ENCODE measurements at regions of chr1 and their contacts with region 1.

Region 1: GRCh38 chr1:244047621-244048471 is 3.2 kb upstream of the ZBTB18 start:
- DNase-seq: peak; percentile 97
- H3K4me3 ChIP-seq: peak overlapping the region; percentile 69
- H3K27ac ChIP-seq: peak overlapping the region; percentile 82
- H3K4me1 ChIP-seq: peaks cover 42% of the 10 kb centered on the region
- H3K27me3 ChIP-seq: no peaks in the 10 kb centered on the region
- CTCF ChIP-seq: 0 out of 2 replicates have a peak, but pooled peaks have one; percentile 14

Region 2: DNA sequence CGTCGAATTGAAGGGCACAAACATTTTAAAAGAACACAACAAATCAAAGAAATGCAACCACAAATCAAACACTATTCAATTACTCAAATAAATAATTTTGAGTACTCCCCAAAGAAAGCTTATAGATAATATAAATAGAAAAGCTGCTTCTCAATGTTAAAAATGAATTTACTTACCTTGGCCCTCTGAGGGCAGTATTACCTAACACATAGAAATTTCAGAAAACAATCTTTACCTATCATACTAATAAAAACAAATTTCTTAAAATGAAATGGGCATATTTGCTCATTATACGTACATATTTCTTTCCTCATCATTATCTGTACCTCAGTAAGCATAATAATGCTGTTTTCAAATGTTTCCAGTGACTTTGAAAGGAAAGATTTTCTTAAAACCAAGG is 339.6 kb before region 1 on chr1:
- CTCF ChIA-PET with region 1: no interaction called
- POLR2A ChIA-PET with region 1: no interaction called
- intact Hi-C with region 1: loop called (anchors 5 kb)
- DNase-seq: no peak
- H3K4me3 ChIP-seq: no peak overlapping the region
- H3K27ac ChIP-seq: no peak overlapping the region
- H3K4me1 ChIP-seq: no peaks in the 10 kb centered on the region
- H3K27me3 ChIP-seq: no peaks in the 10 kb centered on the region
- CTCF ChIP-seq: peak; percentile 55; the same call in 1 of the 2 replicates

Region 3: GRCh38 chr1:243917177-243917862 is 130.5 kb before region 1 on chr1:
- CTCF ChIA-PET with region 1: no interaction called
- POLR2A ChIA-PET with region 1: no interaction called
- intact Hi-C with region 1: loop called (anchors 2 kb)
- DNase-seq: peak; percentile 27 to 67
- H3K4me3 ChIP-seq: peak overlapping the region; percentile 35; the same call in 1 of the 2 replicates
- H3K27ac ChIP-seq: peak overlapping the region; percentile 80
- H3K4me1 ChIP-seq: peaks cover 49% of the 10 kb centered on the region
- H3K27me3 ChIP-seq: no peaks in the 10 kb centered on the region
- CTCF ChIP-seq: no peak

Region 4: DNA sequence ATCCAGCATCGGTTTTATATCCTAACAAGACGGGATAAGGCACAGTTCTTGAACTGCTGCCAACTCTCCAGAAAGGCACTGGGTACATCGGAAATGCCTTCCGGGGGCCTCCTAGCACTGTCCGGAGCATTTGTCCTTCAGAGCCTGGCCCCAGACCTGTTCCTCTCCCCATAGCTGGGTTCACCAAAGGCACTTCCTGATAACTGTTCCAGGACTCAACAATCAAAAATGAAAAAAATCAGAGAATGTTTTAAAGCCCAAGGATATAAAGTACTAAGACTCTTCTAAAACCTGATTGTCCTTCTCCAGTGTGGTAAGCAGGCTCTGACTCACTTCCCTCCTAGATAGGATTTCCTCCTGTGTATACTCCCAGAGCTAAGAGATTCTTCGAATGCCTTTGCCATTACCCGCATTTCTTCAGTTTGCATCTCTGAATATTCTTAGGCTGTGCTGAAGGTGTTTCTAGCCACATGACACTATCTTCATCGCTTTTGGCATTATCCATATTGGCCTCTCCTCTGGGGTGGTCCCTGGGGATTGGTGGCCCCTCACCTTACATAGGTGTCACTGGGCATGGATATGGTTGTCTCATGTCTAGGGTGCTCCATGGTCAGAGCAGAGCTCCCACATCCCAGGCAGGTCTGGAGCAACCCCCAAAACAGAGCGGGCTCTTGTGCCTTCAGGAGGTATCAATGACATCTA is 116.2 kb after region 1 on chr1:
- CTCF ChIA-PET with region 1: no interaction called
- POLR2A ChIA-PET with region 1: interaction called, 4 read pairs
- intact Hi-C with region 1: loop called (anchors 2 kb)
- DNase-seq: peak; percentile 76 to 100
- H3K4me3 ChIP-seq: peak overlapping the region; percentile 15; the same call in 1 of the 2 replicates
- H3K27ac ChIP-seq: peak overlapping the region; percentile 83
- H3K4me1 ChIP-seq: peaks cover 54% of the 10 kb centered on the region
- H3K27me3 ChIP-seq: no peaks in the 10 kb centered on the region
- CTCF ChIP-seq: no peak

Region 5: DNA sequence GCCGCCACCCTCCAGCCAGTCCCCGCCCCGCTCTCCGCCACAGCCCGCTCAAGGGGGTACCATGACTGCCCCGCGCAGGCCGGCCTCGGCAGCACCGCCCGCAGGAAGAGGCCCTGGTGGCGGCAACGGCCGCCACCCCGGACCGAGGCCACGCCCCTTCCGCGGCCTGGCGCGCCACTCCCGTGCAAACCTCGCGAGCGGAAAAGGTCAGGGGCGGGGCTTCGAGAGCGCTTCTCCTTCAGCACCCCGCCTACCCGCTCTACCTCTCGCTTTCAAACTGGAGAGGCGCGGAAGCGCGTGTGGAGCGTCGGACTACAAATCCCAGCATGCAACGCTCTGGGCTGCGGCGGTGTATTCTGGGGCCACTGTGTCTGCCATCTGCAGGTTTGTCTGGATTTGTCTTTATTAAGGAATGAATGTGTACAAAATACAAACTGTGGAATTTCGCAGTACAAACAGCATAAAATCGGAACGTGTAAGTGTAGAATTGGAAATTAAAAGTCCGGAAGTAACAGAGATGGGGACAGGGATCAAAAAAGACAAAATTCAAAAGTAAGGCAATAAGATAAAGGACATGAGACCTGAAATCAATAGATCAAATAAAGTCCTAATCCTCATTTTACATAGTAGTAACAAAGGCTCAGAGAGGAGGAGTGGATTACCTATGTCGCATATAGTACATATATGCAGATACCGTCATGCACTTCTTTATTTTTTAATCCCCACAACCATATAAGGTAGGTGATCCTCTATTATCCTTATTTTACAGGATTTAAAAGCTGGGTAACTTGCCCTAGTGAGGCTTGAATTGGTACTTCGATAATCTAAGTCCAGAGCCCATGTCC is 404.3 kb after region 1 on chr1:
- CTCF ChIA-PET with region 1: no interaction called
- POLR2A ChIA-PET with region 1: no interaction called
- intact Hi-C with region 1: loop called (anchors 5 kb)
- DNase-seq: peak; percentile 96 to 99
- H3K4me3 ChIP-seq: peak overlapping the region; percentile 85
- H3K27ac ChIP-seq: 0 out of 2 replicates have a peak overlapping the region, but pooled peaks have one; percentile 16
- H3K4me1 ChIP-seq: peaks cover 48% of the 10 kb centered on the region
- H3K27me3 ChIP-seq: no peaks in the 10 kb centered on the region
- CTCF ChIP-seq: peak; percentile 47; the same call in 1 of the 2 replicates